ENCODE measurements at regions of chr14 and their contacts with region 1.

Region 1: DNA sequence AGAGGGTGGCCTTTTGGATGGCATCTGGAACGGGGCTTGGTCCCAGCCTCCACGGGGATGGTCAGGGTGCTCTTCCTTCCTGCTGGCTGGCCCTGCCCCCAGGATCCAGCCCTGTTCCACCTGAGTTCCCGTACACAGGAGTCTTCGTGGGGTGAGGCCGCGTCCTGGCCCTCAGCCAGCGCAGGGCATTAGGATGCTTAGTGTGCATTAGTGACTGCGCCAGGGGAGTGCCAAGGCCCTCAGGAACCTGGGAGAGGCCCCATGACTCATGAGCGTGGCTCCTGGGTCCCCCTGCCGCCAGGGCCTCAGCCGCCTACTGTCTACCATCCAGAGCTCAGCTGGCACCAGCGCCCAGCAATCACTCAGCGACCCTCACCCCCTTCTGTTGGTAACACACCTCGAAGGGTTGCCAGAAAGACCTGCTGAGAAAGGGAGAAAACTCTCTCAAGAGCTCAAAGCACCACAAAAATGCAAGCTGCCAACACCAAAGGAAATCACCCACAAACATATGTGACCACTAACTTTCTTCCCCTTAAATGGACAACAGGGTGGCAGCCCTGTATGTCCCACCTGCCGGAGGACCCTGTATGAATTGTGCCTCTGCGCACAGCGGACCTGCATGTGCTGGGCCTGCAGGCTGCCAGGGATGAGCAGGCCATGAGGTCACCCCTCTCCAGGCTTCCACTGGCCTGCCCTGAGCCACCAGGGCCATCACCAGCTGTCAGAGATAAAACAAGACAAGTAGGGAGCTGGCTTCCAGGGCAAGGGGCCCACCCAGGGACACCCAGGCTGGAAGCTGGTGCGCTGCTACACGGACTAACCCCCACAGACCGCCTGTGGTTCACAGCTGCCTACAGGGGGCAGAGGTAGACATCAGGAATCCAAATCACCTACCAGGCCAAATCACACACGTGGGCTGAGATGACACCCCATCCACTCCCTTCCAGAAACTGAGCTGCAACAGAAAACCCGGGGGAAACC is 28.7 kb downstream of the CCDC85C start:
- DNase-seq: no peak
- H3K4me3 ChIP-seq: no peak overlapping the region
- H3K27ac ChIP-seq: no peak overlapping the region
- H3K4me1 ChIP-seq: peaks cover 17 to 79% (median 65%) of the 10 kb centered on the region in 4 experiments
- H3K27me3 ChIP-seq: peaks cover 0 to 3% (median 0%) of the 10 kb centered on the region in 4 experiments; a peak in 2 of 7 replicates
- CTCF ChIP-seq: peak in 1 of 3 experiments; percentile 30; a peak in 1 of 4 replicates
- EP300 ChIP-seq: no peak
- POLR2A ChIP-seq: no peak
- RAD21 ChIP-seq: no peak; a peak in 1 of 4 replicates

Region 2: DNA sequence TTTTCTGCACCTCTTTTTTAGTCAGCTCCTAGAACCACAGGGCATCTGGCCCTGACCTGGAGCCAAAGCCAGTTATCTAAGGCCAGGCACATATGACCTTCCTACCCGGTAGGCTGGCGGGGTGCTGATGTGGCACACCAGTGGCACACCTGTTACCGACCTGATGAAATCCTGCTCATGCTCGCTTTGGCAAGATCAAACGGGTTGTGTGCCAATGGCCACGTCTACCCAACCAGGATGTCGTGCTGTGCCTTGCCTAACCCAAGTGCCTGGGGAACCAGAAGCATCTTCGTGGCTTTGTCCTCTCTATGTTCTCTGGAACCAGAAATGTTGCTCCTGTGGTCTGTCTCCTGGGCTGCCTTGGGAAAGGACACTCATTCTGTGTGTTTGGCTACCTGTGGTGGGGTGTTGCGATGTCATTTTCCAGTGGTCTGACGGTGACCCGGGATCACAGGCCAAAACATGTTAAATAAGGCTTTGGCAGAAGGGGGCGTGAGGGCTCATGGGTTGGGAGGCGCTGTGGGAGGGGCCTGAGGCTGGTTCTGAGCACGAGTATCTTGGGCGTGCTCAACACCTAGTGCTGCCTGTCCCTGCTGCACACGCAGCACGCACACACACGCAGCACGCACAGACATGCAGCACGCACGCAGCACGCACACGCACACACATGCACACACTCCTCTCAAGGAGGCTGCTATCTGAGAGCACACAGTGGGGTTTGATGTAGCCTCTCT is 66.3 kb before region 1 on chr14:
- CTCF ChIA-PET with region 1: no interaction called
- POLR2A ChIA-PET with region 1: no interaction called
- DNase-seq: peak in 1 of 2 experiments; percentile 56
- H3K4me3 ChIP-seq: no peak overlapping the region
- H3K27ac ChIP-seq: no peak overlapping the region
- H3K4me1 ChIP-seq: peaks cover 0 to 9% (median 3%) of the 10 kb centered on the region in 4 experiments; a peak in 3 of 7 replicates
- H3K27me3 ChIP-seq: no peaks in the 10 kb centered on the region; a peak in 1 of 7 replicates
- CTCF ChIP-seq: peak in 1 of 3 experiments; percentile 3; a peak in 1 of 4 replicates
- EP300 ChIP-seq: no peak
- POLR2A ChIP-seq: no peak
- RAD21 ChIP-seq: peak in 1 of 2 experiments; percentile 34; a peak in 2 of 4 replicates

Region 3: DNA sequence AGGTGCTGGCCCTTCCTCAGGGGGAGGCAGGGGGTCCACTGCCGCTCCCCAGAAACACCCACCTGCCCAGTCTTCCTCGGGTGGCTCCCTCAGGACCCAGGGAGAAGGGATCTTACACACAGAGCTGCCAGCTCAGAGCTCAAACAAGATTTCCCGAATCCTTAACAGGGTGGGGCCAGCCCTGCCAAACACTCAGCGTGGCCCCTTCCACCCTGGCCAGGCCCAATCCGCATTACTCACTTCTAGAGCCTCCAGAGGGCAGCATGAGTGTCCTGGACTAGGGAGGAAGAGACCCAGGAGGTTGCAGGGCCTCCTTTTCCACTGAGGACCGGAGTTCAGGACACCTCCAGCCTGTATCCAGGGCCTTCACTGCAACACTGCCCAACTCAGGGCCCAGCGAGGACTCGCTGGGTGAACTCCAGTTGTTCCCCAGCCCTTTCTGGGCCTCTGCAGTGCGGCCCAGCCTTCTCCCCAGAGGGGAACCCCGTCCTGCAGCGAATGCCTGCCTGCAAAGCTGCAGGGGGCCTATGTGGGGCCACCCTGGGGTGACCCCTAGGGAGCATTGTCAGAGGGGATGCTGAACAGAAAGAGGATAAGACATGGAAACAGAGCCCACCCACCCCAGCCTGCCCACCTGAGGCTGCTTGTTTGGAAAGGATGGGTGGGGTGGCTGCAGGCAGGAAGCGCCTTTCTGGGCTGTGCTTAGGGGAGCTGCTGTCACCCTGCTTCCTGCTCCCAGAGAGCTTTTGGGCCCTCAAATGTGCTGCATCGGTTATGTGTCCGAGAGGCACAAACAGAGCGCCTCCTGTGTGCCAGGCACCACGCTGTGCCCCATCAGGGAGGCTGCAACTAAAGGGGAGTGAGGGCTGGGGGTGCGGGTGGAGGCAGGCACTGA is 50.3 kb before region 1 on chr14:
- CTCF ChIA-PET with region 1: interaction called, 12 read pairs
- POLR2A ChIA-PET with region 1: no interaction called
- DNase-seq: no peak
- H3K4me3 ChIP-seq: no peak overlapping the region
- H3K27ac ChIP-seq: no peak overlapping the region
- H3K4me1 ChIP-seq: peaks cover 11 to 51% (median 37%) of the 10 kb centered on the region in 4 experiments
- H3K27me3 ChIP-seq: no peaks in the 10 kb centered on the region
- CTCF ChIP-seq: peak in 2 of 3 experiments; percentile 15 to 51; a peak in 2 of 4 replicates
- EP300 ChIP-seq: no peak
- POLR2A ChIP-seq: no peak
- RAD21 ChIP-seq: peak; percentile 38 to 54

Region 4: GRCh38 chr14:99563233-99564129 is 11.9 kb before region 1 on chr14:
- CTCF ChIA-PET with region 1: interaction called, 28 read pairs
- POLR2A ChIA-PET with region 1: interaction called, 4 read pairs
- DNase-seq: peak; percentile 75 to 92
- H3K4me3 ChIP-seq: no peak overlapping the region
- H3K27ac ChIP-seq: no peak overlapping the region
- H3K4me1 ChIP-seq: peaks cover 2 to 61% (median 40%) of the 10 kb centered on the region in 4 experiments
- H3K27me3 ChIP-seq: no peaks in the 10 kb centered on the region
- CTCF ChIP-seq: peak in 2 of 3 experiments; percentile 68 to 70; a peak in 3 of 4 replicates
- EP300 ChIP-seq: peak in 1 of 2 experiments; percentile 78; a peak in 1 of 3 replicates
- POLR2A ChIP-seq: no peak
- RAD21 ChIP-seq: peak; percentile 49 to 71; a peak in 3 of 4 replicates

Region 5: DNA sequence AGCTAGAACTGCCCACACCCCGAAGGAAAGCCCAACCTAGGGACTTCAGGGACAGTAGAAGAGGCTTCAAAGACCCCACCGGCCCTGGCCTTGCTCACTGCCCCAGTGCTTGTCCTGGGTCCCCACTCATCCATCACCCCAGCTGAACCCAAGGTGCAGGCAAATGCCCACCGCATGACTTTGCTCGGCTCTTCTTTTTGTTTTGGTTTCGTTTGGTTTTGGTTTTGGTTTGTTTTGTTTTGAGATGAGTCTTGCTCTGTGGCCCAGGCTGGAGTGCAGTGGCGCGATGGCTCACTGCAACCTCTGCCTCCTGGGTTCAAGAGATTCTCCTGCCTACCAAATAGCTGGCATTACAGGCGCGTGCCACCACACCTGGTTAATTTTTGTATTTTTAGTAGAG is 19.7 kb after region 1 on chr14:
- CTCF ChIA-PET with region 1: interaction called, 35 read pairs
- POLR2A ChIA-PET with region 1: interaction called, 3 read pairs
- DNase-seq: no peak
- H3K4me3 ChIP-seq: no peak overlapping the region
- H3K27ac ChIP-seq: no peak overlapping the region
- H3K4me1 ChIP-seq: peaks cover 0 to 26% (median 18%) of the 10 kb centered on the region in 4 experiments; a peak in 6 of 7 replicates
- H3K27me3 ChIP-seq: no peaks in the 10 kb centered on the region; a peak in 1 of 7 replicates
- CTCF ChIP-seq: no peak
- EP300 ChIP-seq: no peak
- POLR2A ChIP-seq: no peak
- RAD21 ChIP-seq: no peak

Region 6: DNA sequence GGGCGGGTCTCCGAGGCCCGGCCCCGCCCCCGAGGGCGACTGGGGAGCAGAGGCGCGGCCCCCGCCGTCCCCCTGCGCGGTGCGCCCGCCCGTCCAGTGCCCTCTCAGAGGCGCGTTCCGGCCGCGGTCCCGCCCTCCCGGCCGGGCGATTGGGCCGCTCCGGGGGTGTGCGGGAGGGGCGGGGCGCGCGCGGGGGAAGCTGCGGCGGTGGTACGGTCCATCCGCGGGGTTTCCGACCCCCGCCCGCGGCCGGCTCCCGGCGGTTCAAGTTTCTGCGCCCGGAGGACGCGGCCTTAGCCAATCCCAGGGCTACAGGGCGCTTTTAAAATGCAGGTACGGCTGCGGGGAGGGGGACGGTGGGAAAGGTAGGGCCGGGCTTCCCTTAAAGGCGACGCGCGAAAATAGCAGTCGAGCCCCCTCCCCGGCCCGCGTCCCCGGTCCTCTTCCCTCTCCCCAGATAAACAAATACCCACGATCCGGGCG is 29.0 kb after region 1 on chr14:
- CTCF ChIA-PET with region 1: interaction called, 11 read pairs
- POLR2A ChIA-PET with region 1: interaction called, 10 read pairs
- DNase-seq: peak; percentile 82 to 95
- H3K4me3 ChIP-seq: peak overlapping the region; percentile 76 to 87 (median 82)
- H3K27ac ChIP-seq: no peak overlapping the region
- H3K4me1 ChIP-seq: peaks cover 4 to 28% (median 17%) of the 10 kb centered on the region in 4 experiments
- H3K27me3 ChIP-seq: peaks cover 9 to 34% (median 26%) of the 10 kb centered on the region in 4 experiments; a peak in 6 of 7 replicates
- CTCF ChIP-seq: no peak
- EP300 ChIP-seq: peak in 1 of 2 experiments; percentile 99; a peak in 2 of 3 replicates
- POLR2A ChIP-seq: no peak
- RAD21 ChIP-seq: no peak

Region 7: GRCh38 chr14:99609245-99610117 is 34.1 kb after region 1 on chr14:
- CTCF ChIA-PET with region 1: interaction called, 11 read pairs
- POLR2A ChIA-PET with region 1: interaction called, 10 read pairs
- DNase-seq: no peak
- H3K4me3 ChIP-seq: no peak overlapping the region
- H3K27ac ChIP-seq: no peak overlapping the region
- H3K4me1 ChIP-seq: peaks cover 0 to 15% (median 6%) of the 10 kb centered on the region in 4 experiments; a peak in 4 of 7 replicates
- H3K27me3 ChIP-seq: peaks cover 0 to 13% (median 8%) of the 10 kb centered on the region in 4 experiments; a peak in 4 of 7 replicates
- CTCF ChIP-seq: no peak
- EP300 ChIP-seq: no peak
- POLR2A ChIP-seq: no peak
- RAD21 ChIP-seq: no peak

Region 8: DNA sequence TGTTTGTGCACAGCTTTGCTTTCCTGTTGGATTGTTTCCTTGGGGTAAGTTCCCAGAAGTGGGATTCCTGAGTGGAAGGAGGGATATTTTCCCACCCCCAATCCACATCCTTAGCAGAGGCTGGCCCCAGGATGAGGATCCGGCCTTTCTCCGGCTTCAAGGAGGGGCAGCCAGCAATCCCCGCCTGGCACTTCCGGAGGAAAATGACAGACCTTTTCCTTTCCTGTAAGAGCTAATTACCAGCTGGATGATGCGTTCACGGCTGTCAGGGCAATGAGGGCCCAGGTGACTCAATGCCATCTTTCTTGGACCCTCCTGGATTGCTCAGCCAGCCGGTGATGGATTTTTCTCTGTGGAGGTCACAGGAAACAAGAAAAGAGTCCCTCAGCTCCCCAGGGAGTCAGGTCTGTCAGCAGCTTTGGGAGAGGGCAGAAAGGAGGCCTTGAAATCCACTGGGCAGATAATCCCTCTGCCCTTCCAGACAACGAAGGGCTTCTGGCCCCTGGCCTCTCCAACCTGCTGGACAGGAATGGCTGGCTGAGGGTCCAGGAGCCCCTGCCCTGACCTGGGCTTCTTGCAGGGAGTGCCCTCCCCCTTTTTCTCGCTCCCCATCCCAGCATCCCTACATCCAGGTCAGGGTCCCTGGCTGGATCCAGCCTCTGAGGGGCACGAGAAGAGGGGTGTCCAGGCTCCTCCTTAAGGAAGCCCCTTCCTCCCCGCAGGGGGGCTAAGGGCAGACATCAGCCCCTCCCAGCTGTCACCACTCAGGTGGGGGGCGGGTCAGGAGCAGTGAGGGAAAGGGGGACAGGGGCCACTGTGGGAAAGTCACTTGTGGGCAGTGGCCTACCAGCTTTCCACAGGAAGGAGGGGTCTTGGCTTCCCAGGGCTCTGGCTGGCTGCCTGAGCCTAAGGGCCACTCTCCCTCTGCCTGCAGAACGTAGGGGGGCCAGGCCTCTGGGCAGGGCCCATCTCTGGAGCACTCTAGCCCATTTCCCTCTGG is 44.8 kb after region 1 on chr14:
- CTCF ChIA-PET with region 1: interaction called, 15 read pairs
- POLR2A ChIA-PET with region 1: no interaction called
- DNase-seq: no peak
- H3K4me3 ChIP-seq: no peak overlapping the region
- H3K27ac ChIP-seq: no peak overlapping the region
- H3K4me1 ChIP-seq: peaks cover 0 to 5% (median 1%) of the 10 kb centered on the region in 4 experiments; a peak in 3 of 7 replicates
- H3K27me3 ChIP-seq: no peaks in the 10 kb centered on the region; a peak in 1 of 7 replicates
- CTCF ChIP-seq: no peak
- EP300 ChIP-seq: no peak
- POLR2A ChIP-seq: no peak
- RAD21 ChIP-seq: no peak